Activated naive CD4-positive, alpha-beta T cell treated with anti-CD3 and anti-CD28 coated beads for 36 hours (primary cell): ENCODE measurements at regions of chr4 and their contacts with region 1.

Region 1: GRCh38 chr4:143513306-143514168 is at the start of gene SMARCA5:
- DNase-seq: peak; percentile 96
- H3K4me3 Mint-ChIP-seq: peak within 1 kb of the TSS; percentile 96
- H3K27ac Mint-ChIP-seq: peak within 1 kb of the TSS; percentile 97
- H3K4me1 Mint-ChIP-seq: peaks cover 30% of the 10 kb centered on the region
- H3K27me3 Mint-ChIP-seq: no peaks in the 10 kb centered on the region
- total RNA-seq, gene SMARCA5: 62.4 to 63.5 TPM

Region 2: DNA sequence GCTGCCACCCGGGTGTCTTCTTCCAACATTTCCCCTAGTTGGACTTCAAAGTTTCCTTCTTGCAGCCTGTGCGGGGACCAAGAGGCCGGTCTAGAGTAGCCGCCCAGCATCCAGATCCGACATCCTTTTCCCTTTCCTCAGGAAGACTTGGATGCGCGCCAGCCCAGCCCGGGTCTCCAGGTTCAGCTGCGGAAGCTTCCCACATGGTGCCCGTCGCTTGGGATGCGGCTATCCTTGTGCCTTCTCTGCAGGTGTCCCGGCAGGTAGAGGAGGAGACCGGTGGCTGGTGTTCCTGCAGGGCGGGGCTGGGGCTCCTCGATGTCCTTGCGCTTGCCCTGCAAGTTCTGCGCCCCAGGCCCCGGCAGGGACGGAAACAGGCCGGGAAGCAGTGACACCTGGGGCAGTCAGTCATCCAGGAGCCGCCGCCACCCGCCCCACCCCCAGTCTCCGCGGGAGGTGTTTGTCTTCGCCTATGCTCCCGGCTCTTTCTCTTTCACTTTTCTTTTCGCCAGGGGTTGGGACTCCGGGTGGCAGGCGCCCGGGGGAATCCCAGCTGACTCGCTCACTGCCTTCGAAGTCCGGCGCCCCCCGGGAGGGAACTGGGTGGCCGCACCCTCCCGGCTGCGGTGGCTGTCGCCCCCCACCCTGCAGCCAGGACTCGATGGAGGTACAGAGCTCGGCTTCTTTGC is 1877.3 kb before region 1 on chr4 and contains the start of gene IL15:
- CTCF ChIA-PET with region 1: no interaction called
- intact Hi-C with region 1: loop called (anchors 1 kb)
- DNase-seq: peak; percentile 86
- H3K4me3 Mint-ChIP-seq: peak within 1 kb of the TSS; percentile 89
- H3K27ac Mint-ChIP-seq: no peak within 1 kb of the TSS
- H3K4me1 Mint-ChIP-seq: peaks cover 10% of the 10 kb centered on the region
- H3K27me3 Mint-ChIP-seq: peaks cover 9% of the 10 kb centered on the region
- total RNA-seq, gene IL15: 0.19 to 0.52 TPM

Region 3: DNA sequence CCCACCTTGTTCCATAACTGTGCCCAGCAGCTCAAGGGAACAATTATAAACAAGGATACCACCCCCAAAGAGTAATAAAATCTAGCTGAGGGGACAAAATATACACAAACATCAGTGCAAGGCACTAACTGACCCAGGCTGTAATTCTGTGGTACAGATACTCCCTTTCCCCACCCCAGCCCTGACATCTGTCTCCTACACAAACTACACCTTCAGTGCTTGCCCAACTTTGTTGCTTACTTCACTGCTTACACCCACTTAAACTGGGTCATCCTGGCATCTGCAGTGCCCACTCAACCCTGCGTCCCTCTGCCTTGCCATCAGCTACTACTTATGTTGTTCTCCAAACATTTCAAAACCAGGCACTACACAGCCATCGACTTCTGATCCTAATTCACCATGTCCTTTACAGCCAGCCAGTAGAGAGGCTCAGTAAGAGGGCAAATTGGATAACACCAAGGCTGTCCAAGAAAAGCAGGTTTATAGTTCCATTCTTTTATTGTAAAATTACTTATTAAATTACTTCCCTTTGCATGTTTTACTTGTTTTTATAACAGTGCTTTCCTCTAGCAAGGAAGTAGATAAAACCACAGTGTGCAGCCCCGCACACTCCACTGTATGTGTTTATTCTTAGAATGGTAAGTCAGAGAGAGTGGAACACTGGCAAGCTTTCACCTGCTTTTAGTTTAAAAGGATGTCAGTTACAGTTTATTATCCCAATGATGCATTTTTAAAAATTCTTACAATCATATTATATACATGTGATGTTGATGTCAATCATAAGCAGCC is 817.0 kb before region 1 on chr4:
- CTCF ChIA-PET with region 1: no interaction called
- intact Hi-C with region 1: loop called (anchors 5 kb)
- DNase-seq: peak; percentile 37
- H3K4me3 Mint-ChIP-seq: peak overlapping the region; percentile 55
- H3K27ac Mint-ChIP-seq: peak overlapping the region; percentile 93
- H3K4me1 Mint-ChIP-seq: peaks cover 62% of the 10 kb centered on the region
- H3K27me3 Mint-ChIP-seq: no peaks in the 10 kb centered on the region

Region 4: GRCh38 chr4:143189528-143189927 is 324.0 kb before region 1 on chr4:
- CTCF ChIA-PET with region 1: no interaction called
- intact Hi-C with region 1: loop called (anchors 1 kb)
- DNase-seq: no peak
- H3K4me3 Mint-ChIP-seq: peak overlapping the region; percentile 63
- H3K27ac Mint-ChIP-seq: peak overlapping the region; percentile 52
- H3K4me1 Mint-ChIP-seq: peaks cover 45% of the 10 kb centered on the region
- H3K27me3 Mint-ChIP-seq: no peaks in the 10 kb centered on the region

Region 5: GRCh38 chr4:143230683-143231082 is 282.9 kb before region 1 on chr4:
- CTCF ChIA-PET with region 1: no interaction called
- intact Hi-C with region 1: no loop called
- DNase-seq: no peak
- H3K4me3 Mint-ChIP-seq: no peak overlapping the region
- H3K27ac Mint-ChIP-seq: no peak overlapping the region
- H3K4me1 Mint-ChIP-seq: no peaks in the 10 kb centered on the region
- H3K27me3 Mint-ChIP-seq: peaks cover 3% of the 10 kb centered on the region

Region 6: GRCh38 chr4:143358923-143359643 is 154.5 kb before region 1 on chr4:
- CTCF ChIA-PET with region 1: no interaction called
- intact Hi-C with region 1: loop called (anchors 1 kb)
- DNase-seq: peak; percentile 69
- H3K4me3 Mint-ChIP-seq: peak overlapping the region; percentile 32
- H3K27ac Mint-ChIP-seq: peak overlapping the region; percentile 72
- H3K4me1 Mint-ChIP-seq: peaks cover 21% of the 10 kb centered on the region
- H3K27me3 Mint-ChIP-seq: no peaks in the 10 kb centered on the region

Region 7: DNA sequence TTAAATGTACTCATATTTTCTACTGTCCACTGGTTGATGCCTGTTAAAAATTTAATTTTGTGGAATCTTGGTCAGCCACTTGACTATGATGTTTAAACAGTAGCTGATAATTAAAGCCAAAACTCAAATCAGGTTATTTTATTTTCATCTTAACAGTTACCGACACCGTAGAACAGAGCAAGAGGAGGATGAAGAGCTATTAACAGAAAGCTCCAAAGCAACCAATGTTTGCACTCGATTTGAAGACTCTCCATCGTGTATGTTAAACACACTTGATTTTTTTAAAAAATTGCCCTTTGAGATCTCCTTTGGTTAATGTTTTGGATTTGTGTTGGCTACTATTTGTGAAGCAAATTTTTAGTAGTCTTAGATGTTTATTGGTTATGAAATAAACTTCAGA is 10.7 kb after region 1 on chr4:
- CTCF ChIA-PET with region 1: no interaction called
- intact Hi-C with region 1: no loop called
- DNase-seq: no peak
- H3K4me3 Mint-ChIP-seq: no peak overlapping the region
- H3K27ac Mint-ChIP-seq: no peak overlapping the region
- H3K4me1 Mint-ChIP-seq: peaks cover 42% of the 10 kb centered on the region
- H3K27me3 Mint-ChIP-seq: no peaks in the 10 kb centered on the region

Region 8: DNA sequence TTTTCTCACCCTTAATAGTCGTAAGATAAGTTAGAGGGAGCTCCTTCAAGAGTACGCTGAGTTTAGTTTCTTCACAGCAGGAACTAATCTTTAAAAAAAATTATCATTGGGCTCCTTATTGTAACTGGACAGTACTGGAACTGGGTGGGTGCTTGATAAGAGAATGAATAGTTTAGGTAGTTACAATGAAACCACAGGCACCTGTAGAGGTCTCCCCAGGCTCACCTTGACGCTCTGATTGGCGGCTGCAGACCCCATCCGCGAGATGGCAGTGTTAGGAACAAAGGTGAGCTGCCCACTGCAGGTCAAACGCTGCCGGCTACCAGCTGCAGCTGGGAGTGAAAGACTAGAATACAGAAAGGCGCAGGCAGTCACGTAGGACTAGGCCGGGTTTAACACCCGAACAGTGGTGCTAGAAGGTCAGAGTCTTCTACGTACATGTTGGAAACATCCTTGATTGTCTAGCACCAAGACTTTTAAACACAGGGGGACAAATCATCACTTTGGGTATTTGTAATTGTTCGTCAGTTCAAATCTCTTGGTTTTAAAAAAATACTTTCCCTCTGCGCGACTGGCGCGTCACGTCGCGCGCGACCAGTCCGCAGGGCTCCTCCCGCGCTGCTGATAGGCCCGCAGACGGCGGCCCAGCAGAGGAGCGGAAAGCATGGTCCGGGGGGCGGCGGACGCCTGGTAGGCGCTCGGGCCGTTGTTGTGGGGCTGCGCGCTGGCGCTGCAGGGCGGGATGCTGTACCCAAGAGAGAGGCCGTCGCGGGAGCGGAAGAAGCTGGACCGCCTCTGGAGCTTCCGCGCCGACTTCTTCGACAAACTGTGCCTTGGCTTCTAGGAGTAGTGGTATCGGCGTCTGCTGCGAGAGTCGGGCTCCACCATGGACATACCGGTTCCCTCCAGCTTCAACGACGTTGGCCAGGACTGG is 45.6 kb after region 1 on chr4:
- CTCF ChIA-PET with region 1: interaction called, 5 read pairs
- intact Hi-C with region 1: loop called (anchors 1 kb)
- DNase-seq: peak; percentile 82
- H3K4me3 Mint-ChIP-seq: peak overlapping the region; percentile 93
- H3K27ac Mint-ChIP-seq: peak overlapping the region; percentile 87
- H3K4me1 Mint-ChIP-seq: peaks cover 28% of the 10 kb centered on the region
- H3K27me3 Mint-ChIP-seq: no peaks in the 10 kb centered on the region